ENCODE measurements at regions of chr7 and their contacts with region 1.

Region 1: DNA sequence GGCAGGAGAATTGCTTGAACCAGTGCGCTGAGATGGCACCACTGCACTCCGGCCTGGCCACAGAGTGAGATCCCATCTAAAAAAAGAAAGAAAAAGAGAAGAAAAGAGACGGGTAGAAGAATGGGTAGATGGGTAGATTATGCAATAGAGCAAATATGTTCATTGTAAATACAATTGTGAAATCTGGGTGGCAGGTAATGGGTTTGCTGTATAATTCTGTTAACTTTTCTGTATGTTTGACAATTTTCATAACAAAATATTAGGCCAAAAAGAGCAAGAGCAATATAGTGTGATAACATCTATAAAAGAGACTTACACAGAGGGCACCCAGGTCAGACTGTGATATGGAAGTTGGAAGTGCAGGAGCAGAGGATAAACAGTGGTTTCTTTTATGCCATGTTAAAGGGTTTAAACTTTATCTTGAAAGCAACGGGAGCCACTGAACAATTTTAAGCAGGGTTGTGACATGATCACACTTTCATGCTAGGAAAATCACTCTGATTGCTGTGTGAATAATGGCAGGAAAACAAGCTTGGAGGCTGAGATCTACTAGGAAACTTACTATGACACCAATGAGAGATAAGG is 6.7 kb upstream of the COL28A1 start:
- DNase-seq: no peak
- H3K4me3 ChIP-seq: no peak overlapping the region
- H3K27ac ChIP-seq: no peak overlapping the region
- H3K4me1 ChIP-seq: no peaks in the 10 kb centered on the region
- H3K27me3 ChIP-seq: no peaks in the 10 kb centered on the region
- CTCF ChIP-seq: no peak
- POLR2A ChIP-seq: no peak

Region 2: GRCh38 chr7:7424151-7424873 is 118.0 kb before region 1 on chr7:
- intact Hi-C with region 1: loop called (anchors 5 kb)
- DNase-seq: peak; percentile 70
- H3K4me3 ChIP-seq: peak overlapping the region; percentile 26 to 29
- H3K27ac ChIP-seq: no peak overlapping the region
- H3K4me1 ChIP-seq: no peaks in the 10 kb centered on the region
- H3K27me3 ChIP-seq: no peaks in the 10 kb centered on the region
- CTCF ChIP-seq: peak; percentile 28 to 84 (median 74)
- POLR2A ChIP-seq: no peak

Region 3: GRCh38 chr7:7585253-7585928 is 43.0 kb after region 1 on chr7:
- intact Hi-C with region 1: no loop called
- DNase-seq: no peak
- H3K4me3 ChIP-seq: no peak overlapping the region
- H3K27ac ChIP-seq: peak overlapping the region; percentile 5 to 55
- H3K4me1 ChIP-seq: peaks cover 3% of the 10 kb centered on the region
- H3K27me3 ChIP-seq: no peaks in the 10 kb centered on the region
- CTCF ChIP-seq: no peak
- POLR2A ChIP-seq: no peak

Region 4: GRCh38 chr7:7662527-7662926 is 120.2 kb after region 1 on chr7:
- intact Hi-C with region 1: no loop called
- DNase-seq: no peak
- H3K4me3 ChIP-seq: no peak overlapping the region
- H3K27ac ChIP-seq: no peak overlapping the region
- H3K4me1 ChIP-seq: no peaks in the 10 kb centered on the region
- H3K27me3 ChIP-seq: no peaks in the 10 kb centered on the region
- CTCF ChIP-seq: no peak
- POLR2A ChIP-seq: no peak